Right lobe of liver (tissue), 6 donors: ENCODE measurements at regions of chr17 and their contacts with region 1.

Region 1: DNA sequence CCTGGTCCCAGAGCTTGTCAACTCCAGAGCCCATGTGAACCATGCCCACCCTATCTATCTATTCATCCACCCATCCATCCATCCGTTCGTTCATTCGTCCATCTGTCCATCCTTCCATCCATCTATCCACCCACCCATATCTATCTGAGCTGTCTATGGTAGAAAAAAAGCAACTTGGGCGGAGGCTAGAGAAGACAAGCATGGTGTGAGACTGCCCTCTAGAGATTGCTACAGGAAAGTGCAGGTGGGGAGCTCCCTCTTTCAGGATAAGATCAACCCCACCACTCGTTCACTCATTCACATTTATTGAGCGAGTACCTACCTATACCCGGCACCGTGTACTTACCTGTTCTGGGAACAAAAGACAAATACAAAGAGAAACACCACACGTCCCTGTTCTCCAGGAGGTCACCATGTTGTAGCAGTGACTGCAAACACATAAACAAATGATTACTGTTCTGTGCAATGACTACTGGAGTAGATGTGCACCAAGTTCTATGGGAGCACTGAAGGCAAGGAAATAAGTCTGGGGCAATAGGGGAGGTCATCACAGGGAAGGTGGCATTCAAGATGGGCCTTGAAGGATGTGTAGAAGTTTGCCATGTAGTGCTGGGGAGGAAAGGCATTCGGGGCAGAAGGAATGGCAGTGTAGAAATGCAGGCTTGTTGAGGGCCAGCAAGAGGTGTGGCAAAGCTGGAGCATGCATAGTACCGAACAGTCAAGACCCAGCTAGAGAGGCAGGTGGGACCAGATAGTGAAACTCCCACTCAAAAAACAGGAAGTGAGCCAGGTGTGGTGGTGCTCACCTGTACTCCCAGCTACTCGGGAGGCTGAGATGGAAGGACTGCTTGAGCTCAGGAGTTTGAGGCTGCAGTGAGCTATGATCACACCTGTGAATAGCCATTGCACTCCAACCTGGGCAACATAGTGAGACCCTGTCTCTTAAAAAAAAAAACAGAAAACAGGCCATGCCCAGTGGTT is 13.4 kb upstream of the ATP5MC1 start:
- DNase-seq: peak in 1 of 3 donors; percentile 59
- ATAC-seq: peak; percentile 92 to 97 (median 95)
- H3K4me3 ChIP-seq: no peak overlapping the region
- H3K27ac ChIP-seq: no peak overlapping the region
- H3K4me1 ChIP-seq: no peaks in the 10 kb centered on the region
- H3K27me3 ChIP-seq: no peaks in the 10 kb centered on the region
- CTCF ChIP-seq: peak; percentile 91 to 96 (median 93)
- POLR2A ChIP-seq: no peak

Region 2: GRCh38 chr17:48678141-48678971 is 200.9 kb before region 1 on chr17:
- intact Hi-C with region 1: loop called in 1 of 2 experiments (anchors 10 kb)
- DNase-seq: peak; percentile 66 to 70 (median 67)
- ATAC-seq: peak; percentile 93 to 98 (median 96)
- H3K4me3 ChIP-seq: no peak overlapping the region
- H3K27ac ChIP-seq: no peak overlapping the region
- H3K4me1 ChIP-seq: no peaks in the 10 kb centered on the region
- H3K27me3 ChIP-seq: no peaks in the 10 kb centered on the region
- CTCF ChIP-seq: peak in 3 of 4 donors; percentile 83 to 96 (median 95)
- POLR2A ChIP-seq: no peak

Region 3: DNA sequence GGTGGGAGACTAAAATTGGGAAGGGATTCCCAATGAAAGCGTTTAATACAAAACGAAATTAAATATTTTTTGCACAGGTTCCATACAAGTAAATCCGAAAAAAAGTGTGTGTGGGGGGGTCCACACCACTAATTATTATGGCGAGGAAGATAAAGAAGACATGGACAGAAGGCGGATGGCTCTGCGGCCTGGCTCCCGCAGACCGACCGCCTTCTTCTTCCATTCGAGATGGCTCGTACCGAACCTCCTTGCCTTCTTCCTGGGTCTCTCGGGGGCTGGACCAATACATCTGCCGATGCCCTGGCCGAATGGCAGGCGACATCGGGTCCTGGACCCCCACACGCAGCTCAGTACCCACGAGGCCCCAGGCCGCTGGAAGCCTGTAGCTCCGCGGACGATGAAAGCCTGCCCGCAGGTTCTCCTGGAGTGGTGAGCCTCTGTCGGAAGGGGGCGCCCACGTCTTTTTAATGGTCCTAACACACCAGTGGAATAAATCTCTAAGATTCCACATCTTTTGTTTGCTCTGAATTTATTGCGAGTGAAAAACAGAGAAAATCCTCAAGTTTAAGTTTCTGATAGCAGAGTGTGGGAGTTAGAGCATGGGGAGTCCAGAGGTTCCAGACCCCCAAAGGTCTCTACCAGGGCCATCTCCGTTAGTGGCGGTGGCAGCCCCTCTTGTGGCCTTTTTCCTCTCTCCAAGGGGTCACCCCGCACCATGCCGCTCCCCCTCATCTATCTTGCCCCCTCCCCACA is 154.8 kb before region 1 on chr17:
- intact Hi-C with region 1: loop called in 1 of 2 experiments (anchors 5 kb)
- DNase-seq: peak; percentile 85 to 89 (median 87)
- ATAC-seq: peak; percentile 87 to 95 (median 92)
- H3K4me3 ChIP-seq: no peak overlapping the region
- H3K27ac ChIP-seq: no peak overlapping the region
- H3K4me1 ChIP-seq: peaks cover 0 to 9% (median 0%) of the 10 kb centered on the region in 4 donors
- H3K27me3 ChIP-seq: peaks cover 21 to 75% of the 10 kb centered on the region in 2 donors
- CTCF ChIP-seq: peak; percentile 58 to 81 (median 74)
- POLR2A ChIP-seq: no peak

Region 4: GRCh38 chr17:48804925-48805411 is 74.2 kb before region 1 on chr17:
- intact Hi-C with region 1: loop called in 1 of 2 experiments (anchors 5 kb)
- DNase-seq: peak; percentile 58 to 69 (median 66)
- ATAC-seq: peak; percentile 89 to 90 (median 90)
- H3K4me3 ChIP-seq: no peak overlapping the region
- H3K27ac ChIP-seq: no peak overlapping the region
- H3K4me1 ChIP-seq: peaks cover 0 to 25% (median 12%) of the 10 kb centered on the region in 4 donors
- H3K27me3 ChIP-seq: no peaks in the 10 kb centered on the region
- CTCF ChIP-seq: peak; percentile 83 to 95 (median 91)
- POLR2A ChIP-seq: no peak

Region 5: GRCh38 chr17:48816774-48817590 is 62.2 kb before region 1 on chr17 and contains the start of gene TTLL6:
- intact Hi-C with region 1: loop called in 1 of 2 experiments (anchors 5 kb)
- DNase-seq: peak; percentile 77 to 84 (median 81)
- ATAC-seq: peak; percentile 94 to 98 (median 95)
- H3K4me3 ChIP-seq: peak within 1 kb of the TSS; percentile 35 to 48 (median 41)
- H3K27ac ChIP-seq: no peak within 1 kb of the TSS
- H3K4me1 ChIP-seq: peaks cover 0 to 5% (median 0%) of the 10 kb centered on the region in 4 donors
- H3K27me3 ChIP-seq: no peaks in the 10 kb centered on the region
- CTCF ChIP-seq: no peak
- POLR2A ChIP-seq: no peak
- total RNA-seq, gene TTLL6: 0.12 TPM in 1 of 6 experiments, not detected in the others

Region 6: DNA sequence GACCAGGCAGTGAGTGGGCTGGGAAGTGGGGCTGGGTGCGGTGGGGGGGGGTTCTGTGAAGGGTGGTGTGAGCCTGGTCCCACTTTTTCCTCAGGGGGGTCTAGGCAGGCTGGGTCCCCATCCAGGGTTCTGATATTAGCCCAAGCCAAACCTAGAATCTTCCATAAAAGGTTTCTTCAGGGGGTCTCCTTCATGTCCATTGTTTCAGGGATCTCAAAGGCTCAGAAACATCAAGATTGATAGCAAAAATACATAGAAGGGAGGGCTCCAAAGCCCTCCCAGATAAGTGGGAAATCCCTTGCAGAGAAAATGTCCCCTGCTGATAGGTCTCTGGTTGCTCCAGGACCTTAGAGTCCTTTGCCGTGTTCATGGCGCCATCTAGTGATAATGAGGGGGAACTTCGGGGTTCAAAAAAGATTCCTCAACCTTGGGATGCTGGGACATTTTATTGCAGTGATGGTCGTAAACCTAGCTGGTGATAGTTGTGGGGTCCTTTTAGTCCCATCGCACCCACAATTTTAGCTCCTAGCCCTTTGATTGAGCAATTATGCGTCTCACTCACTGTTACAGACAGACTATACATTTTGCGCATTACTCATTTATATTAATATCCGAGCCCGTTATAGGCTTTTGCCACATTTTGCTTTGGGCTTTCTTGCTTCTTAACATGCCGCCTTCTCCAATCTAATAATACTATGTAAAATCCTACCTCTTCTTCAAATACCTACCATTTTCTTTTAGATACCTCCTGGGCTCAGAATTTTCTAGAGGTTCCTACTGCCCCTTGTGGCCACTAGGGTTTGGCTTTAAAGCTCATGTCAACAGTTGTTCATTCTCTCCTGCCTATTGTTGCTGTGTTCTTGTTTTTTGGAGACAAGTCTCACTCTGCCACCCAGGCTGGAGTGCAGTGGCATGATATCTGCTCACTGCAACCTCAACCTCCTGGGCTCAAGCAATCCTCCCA is 153.0 kb after region 1 on chr17:
- intact Hi-C with region 1: loop called in 1 of 2 experiments (anchors 10 kb)
- DNase-seq: no peak
- ATAC-seq: peak; percentile 82 to 94 (median 90)
- H3K4me3 ChIP-seq: no peak overlapping the region
- H3K27ac ChIP-seq: no peak overlapping the region
- H3K4me1 ChIP-seq: no peaks in the 10 kb centered on the region
- H3K27me3 ChIP-seq: no peaks in the 10 kb centered on the region
- CTCF ChIP-seq: peak; percentile 64 to 68 (median 66)
- POLR2A ChIP-seq: no peak